CD8-positive, alpha-beta memory T cell (primary cell): ENCODE measurements at regions of chr3 and their contacts with region 1.

Region 1: DNA sequence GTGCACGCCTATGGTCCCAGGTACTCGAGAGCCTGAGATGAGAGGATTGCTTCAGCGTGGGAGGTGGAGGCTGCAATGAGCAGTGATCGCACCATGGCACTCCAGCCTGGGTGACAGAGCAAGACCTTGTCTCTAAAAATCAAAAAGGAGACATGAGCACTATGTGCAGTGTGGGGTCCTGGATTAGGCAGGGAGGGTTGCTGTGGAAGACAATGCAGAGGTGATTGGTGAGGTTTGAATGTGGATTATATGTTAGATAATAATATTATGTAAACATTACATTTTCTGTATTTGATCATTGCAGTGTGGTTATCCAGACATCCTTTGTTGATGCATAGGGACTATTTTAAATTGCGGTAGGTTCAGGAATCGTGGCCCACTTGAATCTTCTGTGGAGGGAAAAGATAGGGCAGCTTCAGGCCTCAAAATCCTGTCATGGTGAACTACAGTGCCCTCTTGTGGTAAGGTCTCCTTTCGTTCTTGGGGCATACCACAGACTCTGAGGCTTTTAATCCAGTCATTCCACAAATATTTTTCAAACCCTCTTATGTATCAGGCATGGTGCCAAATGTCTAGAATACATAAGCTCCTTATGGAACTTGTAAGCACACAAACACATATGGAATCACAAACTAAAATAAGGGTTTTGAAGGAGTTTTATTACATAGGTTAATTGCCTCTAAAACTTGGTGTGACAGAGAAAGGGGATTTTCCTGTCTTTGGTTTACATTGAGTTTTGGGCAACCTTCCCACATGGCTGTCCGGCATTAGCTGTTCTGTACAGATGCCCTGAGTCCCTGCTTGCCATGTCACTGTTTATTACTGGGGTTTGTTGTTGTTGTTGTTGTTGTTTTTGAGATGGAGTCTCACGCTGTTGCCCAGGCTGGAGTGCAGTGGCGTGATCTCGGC is 37.7 kb downstream of the GPD1L start:
- DNase-seq: peak; percentile 12 to 62 (median 36)
- H3K4me3 ChIP-seq: no peak overlapping the region
- H3K4me3 Mint-ChIP-seq: no peak overlapping the region
- H3K27ac ChIP-seq: no peak overlapping the region
- H3K27ac Mint-ChIP-seq: peak overlapping the region in 2 of 8 donors; percentile 19 to 34
- H3K4me1 ChIP-seq: no peaks in the 10 kb centered on the region
- H3K4me1 Mint-ChIP-seq: peaks cover 1 to 9% (median 4%) of the 10 kb centered on the region in 3 donors
- H3K27me3 ChIP-seq: no peaks in the 10 kb centered on the region
- H3K27me3 Mint-ChIP-seq: no peaks in the 10 kb centered on the region

Region 2: GRCh38 chr3:32018757-32019564 is 125.1 kb before region 1 on chr3:
- CTCF ChIA-PET with region 1: interaction called, 59 read pairs
- POLR2A ChIA-PET with region 1: no interaction called
- DNase-seq: peak in 2 of 5 donors; percentile 22 to 36
- H3K4me3 ChIP-seq: no peak overlapping the region
- H3K4me3 Mint-ChIP-seq: no peak overlapping the region
- H3K27ac ChIP-seq: no peak overlapping the region
- H3K27ac Mint-ChIP-seq: no peak overlapping the region
- H3K4me1 ChIP-seq: no peaks in the 10 kb centered on the region
- H3K4me1 Mint-ChIP-seq: no peaks in the 10 kb centered on the region
- H3K27me3 ChIP-seq: no peaks in the 10 kb centered on the region
- H3K27me3 Mint-ChIP-seq: peaks cover 0 to 4% of the 10 kb centered on the region in 2 donors

Region 3: DNA sequence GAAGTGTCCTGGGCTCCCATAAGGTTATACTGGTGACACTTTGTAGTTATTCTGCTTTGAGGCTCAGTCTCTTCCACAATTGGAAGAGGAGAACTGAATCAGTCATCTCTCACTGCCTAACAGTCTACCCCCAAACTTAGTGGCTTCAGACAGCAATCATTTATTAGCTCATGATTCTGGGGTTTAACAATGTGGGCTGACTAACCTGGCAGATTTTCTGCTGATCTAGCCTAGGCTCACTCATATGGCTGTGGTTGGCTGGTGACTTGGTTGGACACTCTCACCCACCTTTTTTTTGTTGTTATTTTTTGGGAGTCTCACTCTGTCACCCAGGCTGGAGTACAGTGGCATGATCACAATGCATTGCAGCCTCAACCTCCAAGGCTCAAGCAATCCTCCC is 30.5 kb before region 1 on chr3:
- CTCF ChIA-PET with region 1: interaction called, 12 read pairs
- POLR2A ChIA-PET with region 1: no interaction called
- DNase-seq: no peak
- H3K4me3 ChIP-seq: no peak overlapping the region
- H3K4me3 Mint-ChIP-seq: peak overlapping the region in 6 of 7 donors; percentile 80 to 86 (median 82)
- H3K27ac ChIP-seq: peak overlapping the region; percentile 19
- H3K27ac Mint-ChIP-seq: peak overlapping the region; percentile 78 to 95 (median 92)
- H3K4me1 ChIP-seq: peaks cover 26% of the 10 kb centered on the region
- H3K4me1 Mint-ChIP-seq: peaks cover 67 to 87% (median 86%) of the 10 kb centered on the region in 3 donors
- H3K27me3 ChIP-seq: no peaks in the 10 kb centered on the region
- H3K27me3 Mint-ChIP-seq: no peaks in the 10 kb centered on the region

Region 4: DNA sequence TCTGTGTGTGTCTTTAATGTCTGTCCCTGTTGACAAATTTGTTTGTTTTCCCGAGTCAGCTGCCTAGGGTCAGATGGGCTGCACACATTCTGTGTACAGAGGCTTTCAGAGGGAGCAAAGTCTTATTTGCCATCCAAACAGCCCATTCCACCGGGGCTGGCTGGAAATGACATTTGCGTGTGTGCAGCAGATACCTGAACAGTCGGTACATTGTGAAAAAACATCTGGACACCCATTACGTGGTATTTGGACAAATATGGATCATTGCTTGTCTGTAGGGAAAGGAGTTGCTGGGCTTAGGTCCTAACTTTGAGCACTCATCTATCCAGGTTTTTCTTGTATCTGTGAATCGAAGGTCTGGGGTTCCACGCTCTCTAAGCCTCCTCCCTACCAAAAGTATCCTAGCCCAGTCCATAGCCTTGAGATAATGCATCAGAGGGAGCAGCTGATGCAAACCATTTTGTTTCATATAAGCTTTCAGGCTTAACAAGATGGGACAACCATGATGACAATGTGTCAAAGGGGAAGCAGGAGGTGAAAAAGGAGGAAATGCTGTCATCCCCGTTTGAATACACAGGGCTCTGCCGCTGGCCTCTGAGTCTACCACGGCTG is 72.2 kb after region 1 on chr3:
- CTCF ChIA-PET with region 1: no interaction called
- POLR2A ChIA-PET with region 1: no interaction called
- DNase-seq: no peak
- H3K4me3 ChIP-seq: no peak overlapping the region
- H3K4me3 Mint-ChIP-seq: no peak overlapping the region
- H3K27ac ChIP-seq: no peak overlapping the region
- H3K27ac Mint-ChIP-seq: no peak overlapping the region
- H3K4me1 ChIP-seq: no peaks in the 10 kb centered on the region
- H3K4me1 Mint-ChIP-seq: no peaks in the 10 kb centered on the region
- H3K27me3 ChIP-seq: no peaks in the 10 kb centered on the region
- H3K27me3 Mint-ChIP-seq: peaks cover 12 to 22% of the 10 kb centered on the region in 2 donors

Region 5: GRCh38 chr3:32321095-32321790 is 177.1 kb after region 1 on chr3:
- CTCF ChIA-PET with region 1: no interaction called
- POLR2A ChIA-PET with region 1: no interaction called
- DNase-seq: no peak
- H3K4me3 ChIP-seq: no peak overlapping the region
- H3K4me3 Mint-ChIP-seq: no peak overlapping the region
- H3K27ac ChIP-seq: no peak overlapping the region
- H3K27ac Mint-ChIP-seq: no peak overlapping the region
- H3K4me1 ChIP-seq: no peaks in the 10 kb centered on the region
- H3K4me1 Mint-ChIP-seq: no peaks in the 10 kb centered on the region
- H3K27me3 ChIP-seq: no peaks in the 10 kb centered on the region
- H3K27me3 Mint-ChIP-seq: peaks cover 0 to 5% of the 10 kb centered on the region in 2 donors